Cardiac septum (tissue), 1 donor: ENCODE measurements at regions of chr5 and their contacts with region 1.

Region 1: GRCh38 chr5:178331399-178331996 is 98.9 kb upstream of the PHYKPL start:
- DNase-seq: no peak

Region 2: DNA sequence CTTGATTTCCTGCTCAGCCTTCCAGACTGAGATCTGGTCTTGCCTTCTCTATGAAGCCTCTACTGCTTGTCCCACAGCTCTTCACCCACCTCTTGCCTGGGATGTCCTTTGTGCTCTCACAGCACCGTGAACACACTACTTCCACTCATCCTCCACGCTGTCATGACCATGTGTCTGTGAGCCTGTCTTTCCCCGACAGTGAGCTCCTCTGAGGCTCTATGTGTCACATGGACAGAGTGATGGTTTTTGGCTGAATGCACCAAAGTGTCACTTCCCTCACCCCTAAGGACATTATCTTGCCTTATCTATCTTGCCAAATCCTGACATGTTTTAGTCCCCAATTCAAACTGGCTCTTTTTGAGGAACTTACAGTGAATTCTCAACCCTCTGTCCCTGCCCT is 110.2 kb before region 1 on chr5:
- intact Hi-C with region 1: no loop called
- DNase-seq: no peak

Region 3: DNA sequence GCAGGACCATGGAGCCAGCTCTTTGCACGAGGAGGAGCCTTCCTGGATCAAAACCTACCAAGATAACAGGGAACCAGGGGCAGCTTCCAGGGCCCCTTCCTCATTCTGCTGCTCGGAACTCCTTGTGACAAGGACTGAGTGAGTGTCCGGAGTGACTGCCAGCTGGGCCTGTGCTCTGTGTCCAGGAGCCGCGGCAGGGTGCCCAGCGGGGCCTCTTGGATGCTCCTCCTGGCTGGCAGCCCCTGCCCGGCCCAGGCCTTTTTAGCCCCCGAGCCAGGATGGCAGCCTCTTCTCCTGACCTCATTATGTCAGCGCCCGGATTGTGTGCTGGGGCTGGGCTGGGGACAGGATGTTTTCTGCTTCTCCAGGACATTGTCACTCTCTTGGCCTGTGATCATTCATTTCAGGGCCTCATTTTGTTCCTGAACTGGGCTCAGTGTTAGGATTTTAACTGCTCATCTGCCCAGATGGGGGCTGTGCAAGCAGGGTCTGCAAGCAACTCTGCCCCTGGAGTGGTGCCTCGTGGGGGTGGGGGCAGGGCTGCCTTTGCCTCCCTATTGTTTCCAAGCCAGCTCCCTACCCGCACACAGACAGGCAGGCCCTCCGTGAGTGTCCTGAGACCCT is 97.0 kb after region 1 on chr5:
- intact Hi-C with region 1: loop called (anchors 2 kb)
- DNase-seq: peak; percentile 85

Region 4: GRCh38 chr5:178535299-178536175 is 204.0 kb after region 1 on chr5:
- intact Hi-C with region 1: loop called (anchors 5 kb)
- DNase-seq: peak; percentile 86

Region 5: DNA sequence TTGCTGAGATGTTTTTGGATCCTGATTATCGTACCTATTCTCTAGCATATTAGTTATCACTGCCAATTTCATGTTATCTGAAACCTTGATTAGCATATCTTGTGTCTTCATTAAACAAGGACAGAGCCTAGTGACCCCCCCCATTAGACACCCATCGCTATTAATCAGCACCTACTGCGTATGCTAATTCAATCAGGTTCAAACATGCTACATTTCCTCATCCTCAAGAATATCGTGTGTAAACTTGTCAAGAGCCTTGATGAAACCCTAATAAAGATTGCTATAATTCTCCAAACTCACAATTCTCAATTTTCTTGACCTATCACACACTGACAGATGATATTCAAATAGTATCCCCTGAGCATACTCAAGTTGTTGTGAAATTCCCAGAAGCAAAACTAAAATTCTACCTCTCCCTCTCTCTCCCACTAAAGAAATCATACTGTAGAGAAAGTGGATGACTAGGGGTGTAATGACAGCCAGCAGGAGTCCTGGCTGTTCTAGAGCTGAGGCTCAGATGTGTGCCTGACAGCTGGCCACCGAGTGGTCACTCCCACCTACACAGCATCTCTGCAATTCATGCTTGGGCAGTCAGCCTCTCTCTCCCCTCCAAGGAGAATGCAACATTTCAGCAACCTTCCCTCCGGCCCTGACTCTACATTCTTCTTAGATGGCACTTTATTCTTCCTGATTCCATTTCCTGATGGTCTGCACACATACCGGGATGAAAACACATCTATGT is 408.1 kb after region 1 on chr5:
- intact Hi-C with region 1: no loop called
- DNase-seq: no peak